ENCODE measurements at regions of chr10 and their contacts with region 1.

Region 1: GRCh38 chr10:33248638-33249037 is 85.8 kb downstream of the NRP1 start:
- DNase-seq: peak in 6 of 14 experiments; percentile 10 to 87 (median 53)
- ATAC-seq: peak; percentile 96
- H3K4me3 ChIP-seq: peak overlapping the region; percentile 0
- H3K4me3 Mint-ChIP-seq: peak overlapping the region; percentile 79
- H3K27ac ChIP-seq: no peak overlapping the region
- H3K27ac Mint-ChIP-seq: peak overlapping the region; percentile 82
- H3K4me1 ChIP-seq: peaks cover 18% of the 10 kb centered on the region
- H3K4me1 Mint-ChIP-seq: peaks cover 69% of the 10 kb centered on the region
- H3K27me3 ChIP-seq: no peaks in the 10 kb centered on the region
- H3K27me3 Mint-ChIP-seq: no peaks in the 10 kb centered on the region
- CTCF ChIP-seq: no peak

Region 2: DNA sequence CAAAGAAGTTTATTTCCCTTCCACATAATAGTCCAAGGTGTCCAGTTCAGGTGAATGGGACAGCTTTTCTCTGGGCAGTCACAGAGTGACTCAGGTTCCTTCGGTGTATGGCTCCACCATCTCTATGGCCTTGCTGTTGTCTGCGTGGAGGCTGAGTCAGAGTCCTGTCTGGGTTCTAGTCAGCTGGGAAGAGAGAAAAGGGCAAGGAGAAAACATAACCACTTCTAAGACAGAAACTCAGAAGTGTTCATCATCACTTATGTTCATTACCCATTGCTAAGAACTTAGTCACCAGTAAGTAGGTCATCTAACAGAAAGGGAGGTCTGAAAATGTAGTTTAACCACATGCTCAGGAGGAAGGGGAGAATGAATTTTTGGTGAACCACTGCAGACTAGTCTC is 835.1 kb before region 1 on chr10:
- CTCF ChIA-PET with region 1: no interaction called
- POLR2A ChIA-PET with region 1: no interaction called
- intact Hi-C with region 1: no loop called
- DNase-seq: peak in 7 of 14 experiments; percentile 0 to 45 (median 8)
- ATAC-seq: peak; percentile 48
- H3K4me3 ChIP-seq: no peak overlapping the region
- H3K4me3 Mint-ChIP-seq: no peak overlapping the region
- H3K27ac ChIP-seq: no peak overlapping the region
- H3K27ac Mint-ChIP-seq: no peak overlapping the region
- H3K4me1 ChIP-seq: no peaks in the 10 kb centered on the region
- H3K4me1 Mint-ChIP-seq: peaks cover 5% of the 10 kb centered on the region
- H3K27me3 ChIP-seq: no peaks in the 10 kb centered on the region
- H3K27me3 Mint-ChIP-seq: no peaks in the 10 kb centered on the region
- CTCF ChIP-seq: no peak

Region 3: GRCh38 chr10:33193057-33193700 is 55.5 kb before region 1 on chr10:
- CTCF ChIA-PET with region 1: interaction called, 15 read pairs
- POLR2A ChIA-PET with region 1: interaction called, 5 read pairs
- intact Hi-C with region 1: no loop called
- DNase-seq: peak; percentile 57 to 85 (median 72)
- ATAC-seq: peak; percentile 77
- H3K4me3 ChIP-seq: no peak overlapping the region
- H3K4me3 Mint-ChIP-seq: no peak overlapping the region
- H3K27ac ChIP-seq: no peak overlapping the region
- H3K27ac Mint-ChIP-seq: no peak overlapping the region
- H3K4me1 ChIP-seq: peaks cover 5% of the 10 kb centered on the region
- H3K4me1 Mint-ChIP-seq: peaks cover 7% of the 10 kb centered on the region
- H3K27me3 ChIP-seq: no peaks in the 10 kb centered on the region
- H3K27me3 Mint-ChIP-seq: peaks cover 8% of the 10 kb centered on the region
- CTCF ChIP-seq: peak; percentile 84

Measured in CD4-positive, alpha-beta T cell (primary cell).